Calu3 (cell line): ENCODE measurements at regions of chr12 and their contacts with region 1.

Region 1: GRCh38 chr12:113727651-113728061 is 238.5 kb downstream of the RBM19 start:
- DNase-seq: no peak
- H3K4me3 Mint-ChIP-seq: no peak overlapping the region
- H3K27ac Mint-ChIP-seq: no peak overlapping the region
- H3K4me1 Mint-ChIP-seq: no peaks in the 10 kb centered on the region
- H3K27me3 Mint-ChIP-seq: peaks cover 67% of the 10 kb centered on the region
- CTCF ChIP-seq: no peak

Region 2: GRCh38 chr12:113075137-113075683 is 652.4 kb before region 1 on chr12:
- CTCF ChIA-PET with region 1: no interaction called
- intact Hi-C with region 1: no loop called
- DNase-seq: no peak
- H3K4me3 Mint-ChIP-seq: no peak overlapping the region
- H3K27ac Mint-ChIP-seq: no peak overlapping the region
- H3K4me1 Mint-ChIP-seq: peaks cover 10% of the 10 kb centered on the region
- H3K27me3 Mint-ChIP-seq: peaks cover 73% of the 10 kb centered on the region
- CTCF ChIP-seq: no peak

Region 3: GRCh38 chr12:113462117-113462774 is 265.4 kb before region 1 on chr12:
- CTCF ChIA-PET with region 1: no interaction called
- intact Hi-C with region 1: loop called (anchors 10 kb)
- DNase-seq: peak; percentile 90
- H3K4me3 Mint-ChIP-seq: peak overlapping the region; percentile 44
- H3K27ac Mint-ChIP-seq: no peak overlapping the region
- H3K4me1 Mint-ChIP-seq: peaks cover 23% of the 10 kb centered on the region
- H3K27me3 Mint-ChIP-seq: peaks cover 98% of the 10 kb centered on the region
- CTCF ChIP-seq: peak; percentile 72